MCF 10A (cell line): ENCODE measurements at regions of chr11 and their contacts with region 1.

Region 1: DNA sequence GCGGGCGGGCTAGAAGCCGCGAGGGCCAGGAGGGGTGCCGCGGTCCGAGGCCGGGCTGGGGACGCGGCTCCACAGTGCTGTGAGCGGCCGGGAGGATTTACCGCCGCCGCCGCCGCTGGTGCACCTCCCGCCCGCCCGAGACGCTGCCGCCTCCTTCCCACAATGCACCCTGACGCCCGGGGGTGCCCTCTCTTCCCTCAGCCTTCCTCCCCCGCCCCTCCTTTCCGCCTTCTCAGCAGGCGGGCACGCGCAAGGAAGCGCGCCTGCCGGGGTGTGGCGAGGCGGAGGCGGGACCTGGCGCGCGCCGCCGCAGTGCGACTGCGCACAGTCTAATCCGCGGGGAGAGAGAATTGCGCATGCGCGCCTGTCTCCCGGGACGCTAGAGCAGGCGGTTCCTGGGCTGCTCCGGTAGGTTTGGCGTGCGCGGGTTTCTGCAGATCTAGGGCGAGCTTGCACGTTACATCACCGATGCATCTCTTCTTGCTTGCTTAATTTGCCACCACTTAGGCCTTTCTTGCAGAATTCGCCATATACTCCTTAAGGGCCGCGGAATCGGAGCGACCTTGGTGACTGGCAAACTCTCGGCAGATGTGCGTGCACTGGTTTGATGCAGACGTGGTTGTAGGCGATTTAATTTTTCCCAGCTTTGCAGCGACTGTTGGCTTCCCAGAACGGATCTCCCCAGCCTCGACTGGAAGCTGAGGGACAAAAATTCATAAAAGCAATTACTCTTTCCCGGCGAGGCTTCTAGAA is at the starts of genes GVQW3 and THAP12:
- DNase-seq: peak; percentile 98
- H3K4me3 Mint-ChIP-seq: peak within 1 kb of the TSS; percentile 93
- H3K27ac Mint-ChIP-seq: peak within 1 kb of the TSS; percentile 54
- H3K4me1 Mint-ChIP-seq: peaks cover 40% of the 10 kb centered on the region
- H3K27me3 Mint-ChIP-seq: no peaks in the 10 kb centered on the region
- CTCF ChIP-seq: peak; percentile 15
- total RNA-seq, gene GVQW3: 1.5 and 1.6 TPM in 2 replicates
- total RNA-seq, gene THAP12: 49.3 and 52.5 TPM in 2 replicates

Region 2: DNA sequence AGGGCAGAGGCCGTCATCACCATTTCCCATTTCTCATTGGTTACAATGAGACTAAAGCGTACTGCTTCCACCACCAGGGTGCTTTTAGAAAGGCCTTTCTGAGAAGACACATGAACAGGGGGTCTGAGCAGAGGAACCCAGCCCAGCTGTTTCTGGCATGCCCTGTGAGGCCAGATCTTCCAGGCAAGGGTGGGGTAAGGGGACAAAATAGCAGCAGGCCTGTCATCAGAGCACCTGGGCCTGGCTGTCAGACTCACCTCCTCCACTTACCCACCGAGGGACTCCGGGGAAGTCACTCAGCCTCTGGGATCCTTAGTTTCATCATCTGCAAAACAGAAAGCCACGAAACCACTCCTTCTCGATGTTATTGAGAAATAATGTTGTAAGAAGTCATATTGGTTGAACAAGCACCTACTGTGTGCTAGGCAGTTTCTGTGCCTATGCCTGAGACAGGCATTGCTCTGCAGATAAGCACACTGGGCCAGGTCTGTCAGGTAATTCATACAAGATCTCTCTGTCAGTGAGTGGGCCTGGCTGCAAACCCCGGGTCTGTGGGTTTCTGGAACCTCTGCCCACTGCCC is 166.1 kb before region 1 on chr11:
- CTCF ChIA-PET with region 1: no interaction called
- POLR2A ChIA-PET with region 1: no interaction called
- intact Hi-C with region 1: no loop called
- DNase-seq: no peak
- H3K4me3 Mint-ChIP-seq: no peak overlapping the region
- H3K27ac Mint-ChIP-seq: no peak overlapping the region
- H3K4me1 Mint-ChIP-seq: no peaks in the 10 kb centered on the region
- H3K27me3 Mint-ChIP-seq: no peaks in the 10 kb centered on the region
- CTCF ChIP-seq: no peak

Region 3: DNA sequence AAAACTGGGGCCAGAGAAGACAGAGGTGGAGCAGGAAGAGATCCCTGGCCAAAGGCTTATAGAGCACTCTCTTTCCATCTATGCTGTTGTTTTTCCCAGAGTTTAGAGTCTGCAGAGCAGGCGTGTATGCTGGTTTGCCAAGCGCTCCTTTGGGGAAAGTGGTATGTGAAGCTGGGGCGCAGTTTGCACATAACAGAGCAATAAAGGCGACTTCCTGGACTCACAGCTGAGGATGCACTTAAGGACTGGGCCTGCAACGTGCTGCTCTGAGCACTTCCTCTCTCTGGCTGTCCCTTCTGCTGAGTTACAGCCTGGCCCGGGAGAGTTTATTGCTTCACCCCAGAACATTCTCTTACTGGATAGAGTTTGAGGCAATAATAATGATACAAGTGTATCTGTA is 41.9 kb before region 1 on chr11:
- CTCF ChIA-PET with region 1: no interaction called
- POLR2A ChIA-PET with region 1: no interaction called
- intact Hi-C with region 1: no loop called
- DNase-seq: no peak
- H3K4me3 Mint-ChIP-seq: no peak overlapping the region
- H3K27ac Mint-ChIP-seq: no peak overlapping the region
- H3K4me1 Mint-ChIP-seq: no peaks in the 10 kb centered on the region
- H3K27me3 Mint-ChIP-seq: no peaks in the 10 kb centered on the region
- CTCF ChIP-seq: no peak

Region 4: DNA sequence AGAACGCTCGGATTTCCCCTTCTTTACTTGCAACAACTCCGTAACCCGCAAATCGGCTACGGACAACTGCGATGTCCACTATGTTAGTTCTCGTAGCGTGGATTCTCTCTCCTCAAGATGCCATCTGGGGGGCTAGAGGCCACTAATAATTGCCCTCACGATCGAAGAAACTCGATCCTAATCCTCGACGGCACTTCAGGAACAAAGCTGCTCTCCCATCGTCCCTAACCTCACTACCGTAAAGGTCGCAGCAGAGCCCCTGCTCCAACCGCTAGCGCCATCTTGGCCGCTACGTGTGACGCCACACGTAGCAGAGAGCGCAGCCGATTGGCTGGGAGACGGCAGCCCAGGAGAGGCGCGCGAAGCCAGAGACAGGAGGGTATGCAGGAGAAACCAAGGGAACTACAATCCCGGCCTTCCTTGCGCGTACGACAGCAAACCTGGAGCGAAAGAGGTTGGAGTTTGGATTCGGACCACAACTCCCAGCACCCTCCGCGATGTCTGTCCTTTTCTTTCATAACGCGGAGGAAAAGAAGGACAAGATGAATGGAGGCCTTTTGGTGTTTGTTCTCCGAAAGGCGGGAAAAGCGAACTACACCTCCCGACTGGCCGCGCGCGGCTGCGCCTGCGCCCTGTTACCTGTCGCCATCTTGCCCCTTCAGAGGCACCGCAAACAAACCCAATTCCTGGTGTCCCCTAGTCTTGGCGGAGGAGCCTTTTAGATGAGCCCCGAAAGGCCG is 63.4 kb after region 1 on chr11 and contains the start of gene EMSY:
- CTCF ChIA-PET with region 1: interaction called, 3 read pairs
- POLR2A ChIA-PET with region 1: interaction called, 33 read pairs
- intact Hi-C with region 1: loop called (anchors 2 kb)
- DNase-seq: peak; percentile 97
- H3K4me3 Mint-ChIP-seq: peak within 1 kb of the TSS; percentile 98
- H3K27ac Mint-ChIP-seq: peak within 1 kb of the TSS; percentile 99
- H3K4me1 Mint-ChIP-seq: peaks cover 5% of the 10 kb centered on the region
- H3K27me3 Mint-ChIP-seq: no peaks in the 10 kb centered on the region
- CTCF ChIP-seq: no peak
- total RNA-seq, gene EMSY: 19.7 and 25.3 TPM in 2 replicates

Region 5: DNA sequence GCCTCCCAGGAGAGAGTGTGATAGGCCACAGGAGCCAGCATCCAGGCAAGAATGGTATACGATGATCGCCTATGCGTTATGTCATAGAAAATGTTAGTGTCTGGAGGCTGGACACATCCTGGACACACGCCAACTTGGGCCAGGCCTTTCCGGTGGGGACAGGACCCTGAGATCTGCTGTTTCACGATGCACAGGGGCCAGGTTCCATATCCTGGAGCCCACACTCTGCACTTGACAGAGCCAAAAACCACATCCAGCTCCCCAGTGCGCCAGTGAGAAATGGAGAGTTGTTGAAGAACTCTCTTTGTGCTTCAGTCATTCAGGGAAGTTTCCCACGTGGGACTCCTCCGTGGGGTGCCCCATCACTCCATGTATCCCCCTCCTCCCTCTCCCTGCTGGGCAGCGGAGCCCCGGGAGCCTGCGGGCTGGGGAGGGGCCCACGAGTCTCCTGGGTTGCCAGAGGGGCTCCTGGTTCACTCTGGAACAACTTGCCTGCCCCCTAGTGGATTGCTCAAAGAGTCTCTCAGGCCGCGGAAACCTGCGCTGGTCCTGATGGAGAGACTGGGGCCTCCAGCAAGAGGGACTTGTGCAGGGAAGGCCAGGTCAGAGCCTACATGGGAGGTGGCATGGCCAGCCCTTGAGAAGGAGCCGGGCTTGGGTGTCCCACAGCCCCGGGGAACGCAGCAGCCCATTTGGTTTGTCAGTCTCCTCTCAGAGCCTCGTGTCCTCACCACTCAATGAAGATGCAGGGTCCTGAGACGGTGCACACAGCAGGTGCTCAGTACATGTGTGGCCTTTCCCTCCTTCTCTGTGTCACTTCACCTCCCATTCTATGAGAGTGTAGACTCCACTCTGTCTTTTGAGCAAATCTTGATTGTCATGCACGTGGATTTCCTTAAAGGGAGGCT is 299.6 kb after region 1 on chr11:
- CTCF ChIA-PET with region 1: no interaction called
- POLR2A ChIA-PET with region 1: no interaction called
- intact Hi-C with region 1: loop called (anchors 2 kb)
- DNase-seq: peak; percentile 80
- H3K4me3 Mint-ChIP-seq: no peak overlapping the region
- H3K27ac Mint-ChIP-seq: no peak overlapping the region
- H3K4me1 Mint-ChIP-seq: no peaks in the 10 kb centered on the region
- H3K27me3 Mint-ChIP-seq: peaks cover 36% of the 10 kb centered on the region
- CTCF ChIP-seq: peak; percentile 70